Activated T-helper 1 cell treated with anti-CD3 and anti-CD28 coated beads, Interleukin-12 subunit alpha, Interleukin-12 subunit beta, Interleukin-2, Interleukin-4 antibody, amounts not matched to agents 30 ng/mL and 10 ng/mL and 1 ng/mL, durations not matched to agents 14 hours and 24 hours and 36 hours (primary cell): ENCODE measurements at regions of chr1 and their contacts with region 1.

Region 1: GRCh38 chr1:40612345-40612831 is 53.1 kb downstream of the RIMS3 start:
- DNase-seq: peak; percentile 65
- H3K4me3 Mint-ChIP-seq: no peak overlapping the region
- H3K27ac Mint-ChIP-seq: no peak overlapping the region
- H3K4me1 Mint-ChIP-seq: no peaks in the 10 kb centered on the region
- H3K27me3 Mint-ChIP-seq: peaks cover 11% of the 10 kb centered on the region

Region 2: DNA sequence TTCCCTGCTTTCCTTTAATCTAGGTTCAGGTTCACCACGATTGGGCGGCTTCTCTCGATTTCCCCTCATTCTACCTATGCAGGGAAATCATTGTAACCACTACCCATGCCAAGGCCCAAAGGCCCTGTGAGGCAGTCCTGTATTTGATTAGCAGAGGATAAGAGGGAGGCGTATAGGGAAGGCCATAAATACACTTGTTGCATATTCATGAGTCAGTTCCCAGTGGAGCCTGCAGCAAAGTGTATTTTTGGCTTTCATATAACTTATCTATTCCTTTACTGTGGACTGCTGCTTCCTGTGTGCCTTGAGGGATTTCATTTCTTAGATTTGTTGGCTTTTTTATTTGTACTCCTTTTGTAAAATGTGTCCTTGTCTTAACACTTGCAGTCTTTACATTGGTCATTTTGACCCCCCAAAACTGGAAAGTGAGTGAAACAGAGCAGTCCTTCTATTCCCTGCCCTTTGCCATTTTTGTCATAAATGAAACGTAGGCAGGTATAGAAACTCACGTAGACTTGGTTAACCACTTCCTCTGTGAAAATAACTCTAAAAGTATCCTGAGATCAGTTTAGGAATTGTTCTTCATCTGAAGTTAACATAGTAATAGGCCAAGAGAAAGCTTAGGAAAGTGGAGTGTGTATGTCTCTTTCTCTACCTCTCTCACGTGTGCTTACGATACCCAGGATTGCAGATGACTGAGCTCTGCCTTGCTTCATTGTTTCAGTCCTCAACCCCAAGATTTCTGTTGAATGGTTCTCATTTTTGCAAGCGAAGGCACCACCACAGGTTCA is 151.5 kb after region 1 on chr1:
- intact Hi-C with region 1: loop called (anchors 2 kb)
- DNase-seq: no peak
- H3K4me3 Mint-ChIP-seq: peak overlapping the region; percentile 77
- H3K27ac Mint-ChIP-seq: peak overlapping the region; percentile 90
- H3K4me1 Mint-ChIP-seq: peaks cover 58% of the 10 kb centered on the region
- H3K27me3 Mint-ChIP-seq: no peaks in the 10 kb centered on the region

Region 3: DNA sequence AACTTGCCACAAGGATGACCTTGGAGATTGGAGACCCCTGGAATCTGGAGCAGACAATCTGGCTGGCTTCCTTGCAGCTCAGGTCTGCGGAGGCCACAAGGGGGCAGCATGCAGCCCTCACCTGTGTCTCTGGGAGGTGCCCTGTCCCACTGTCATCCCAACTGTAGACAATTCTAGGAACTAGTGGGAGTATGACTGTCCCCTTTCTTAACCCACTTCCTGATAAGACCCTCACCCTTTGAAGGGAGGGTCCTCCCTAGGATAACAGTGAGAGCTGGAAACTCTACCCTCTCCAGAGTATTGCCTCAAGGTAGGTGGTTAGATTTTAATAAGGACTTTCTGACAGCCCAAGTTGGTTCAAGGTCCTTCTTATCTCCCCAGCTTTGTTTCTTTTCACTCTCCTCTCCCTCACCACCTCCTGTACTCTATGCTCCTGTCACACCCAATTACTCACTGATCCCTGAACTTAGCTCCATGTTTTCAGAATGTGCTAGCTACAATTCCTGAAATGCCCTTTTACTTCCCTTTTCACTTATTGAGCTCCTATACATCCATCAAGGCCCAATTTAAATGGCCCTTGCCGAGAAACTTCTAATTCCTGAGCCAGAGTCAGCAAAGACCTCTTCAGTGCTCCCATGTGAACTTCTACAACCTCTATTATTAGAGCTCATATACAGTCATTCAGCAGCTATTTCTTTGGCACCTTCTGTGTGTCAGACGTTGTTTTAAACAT is 162.0 kb after region 1 on chr1:
- intact Hi-C with region 1: loop called (anchors 1 kb)
- DNase-seq: peak; percentile 49
- H3K4me3 Mint-ChIP-seq: no peak overlapping the region
- H3K27ac Mint-ChIP-seq: peak overlapping the region; percentile 42
- H3K4me1 Mint-ChIP-seq: peaks cover 24% of the 10 kb centered on the region
- H3K27me3 Mint-ChIP-seq: no peaks in the 10 kb centered on the region

Region 4: DNA sequence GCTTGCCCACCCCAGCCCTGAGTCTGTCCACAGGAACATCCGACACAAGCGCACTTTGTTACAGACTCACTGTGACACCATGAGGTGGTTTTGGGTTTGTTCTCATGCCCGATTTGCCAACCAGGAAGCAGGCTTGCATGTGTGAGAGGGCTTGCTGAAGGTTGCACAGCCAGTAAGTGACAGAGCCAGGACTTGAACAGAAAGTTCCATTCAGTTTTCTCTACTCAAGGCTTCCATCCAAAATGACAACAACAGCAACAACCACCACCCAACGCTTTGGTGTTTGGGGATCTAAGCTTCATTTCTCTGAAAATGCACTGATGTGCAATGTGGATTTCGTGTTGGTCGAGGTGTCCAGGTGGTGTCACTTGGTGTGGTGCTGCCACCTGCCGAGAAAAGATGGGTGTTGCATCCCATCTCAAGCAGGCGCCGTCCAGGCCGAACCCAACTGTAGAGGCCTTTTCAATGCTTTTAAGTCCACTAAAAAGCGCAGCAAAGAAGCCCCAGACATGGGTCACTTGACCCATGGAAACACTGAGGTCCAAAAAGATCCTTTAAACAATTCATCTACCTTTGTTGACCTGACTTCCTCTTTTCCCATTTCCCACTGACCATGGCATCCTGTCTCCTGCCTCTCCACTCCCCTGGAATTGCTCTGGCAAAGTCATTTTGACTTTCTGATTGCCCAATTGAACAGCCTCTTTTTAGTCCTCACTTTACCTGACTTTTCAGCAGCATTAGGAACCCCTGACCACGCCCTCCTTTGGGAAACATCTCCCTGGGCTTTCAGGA is 237.6 kb after region 1 on chr1:
- intact Hi-C with region 1: loop called (anchors 1 kb)
- DNase-seq: peak; percentile 70
- H3K4me3 Mint-ChIP-seq: no peak overlapping the region
- H3K27ac Mint-ChIP-seq: peak overlapping the region; percentile 4
- H3K4me1 Mint-ChIP-seq: peaks cover 34% of the 10 kb centered on the region
- H3K27me3 Mint-ChIP-seq: no peaks in the 10 kb centered on the region

Region 5: GRCh38 chr1:40951943-40952743 is 339.8 kb after region 1 on chr1:
- intact Hi-C with region 1: loop called (anchors 1 kb)
- DNase-seq: peak; percentile 45
- H3K4me3 Mint-ChIP-seq: no peak overlapping the region
- H3K27ac Mint-ChIP-seq: no peak overlapping the region
- H3K4me1 Mint-ChIP-seq: peaks cover 8% of the 10 kb centered on the region
- H3K27me3 Mint-ChIP-seq: peaks cover 15% of the 10 kb centered on the region